PC-3 (cell line): ENCODE measurements at regions of chrX and their contacts with region 1.

Region 1: DNA sequence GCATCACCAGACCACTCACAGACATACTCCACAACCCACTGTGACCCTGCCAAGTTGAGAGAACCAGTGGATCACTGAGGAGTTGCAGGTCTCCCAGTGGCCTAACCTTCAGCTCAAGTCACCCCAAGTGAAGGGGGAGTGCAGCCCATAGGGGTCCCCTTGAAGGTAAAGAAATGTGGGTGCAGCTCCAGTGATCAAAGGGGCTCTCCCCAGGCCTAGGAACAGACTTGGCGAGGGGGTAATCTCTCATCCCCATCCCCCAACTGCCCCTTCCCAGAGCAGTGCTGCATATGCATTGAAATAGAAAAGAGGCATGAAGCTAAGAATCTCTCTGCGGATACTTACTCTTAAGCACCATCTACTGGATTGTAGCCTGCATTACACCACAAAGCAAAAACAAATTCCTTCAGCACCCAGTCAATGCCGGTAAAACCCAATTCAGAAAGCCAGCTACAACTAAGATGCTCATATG is 27.0 kb downstream of the MAGEE1 start:
- DNase-seq: peak; percentile 50
- ATAC-seq: peak; percentile 54
- H3K4me3 ChIP-seq: no peak overlapping the region
- H3K27ac ChIP-seq: no peak overlapping the region
- H3K4me1 ChIP-seq: no peaks in the 10 kb centered on the region
- H3K27me3 ChIP-seq: no peaks in the 10 kb centered on the region
- CTCF ChIP-seq: peak; percentile 61

Region 2: GRCh38 chrX:76427560-76428242 is 26.8 kb before region 1 on chrX and contains the start of gene MAGEE1:
- CTCF ChIA-PET with region 1: no interaction called
- POLR2A ChIA-PET with region 1: no interaction called
- intact Hi-C with region 1: loop called (anchors 2 kb)
- DNase-seq: peak; percentile 75
- ATAC-seq: peak; percentile 90
- H3K4me3 ChIP-seq: peak within 1 kb of the TSS; percentile 86
- H3K27ac ChIP-seq: no peak within 1 kb of the TSS
- H3K4me1 ChIP-seq: no peaks in the 10 kb centered on the region
- H3K27me3 ChIP-seq: no peaks in the 10 kb centered on the region
- CTCF ChIP-seq: no peak
- total RNA-seq, gene MAGEE1: 1.7 and 2.8 TPM in 2 replicates